CD8-positive, alpha-beta T cell (primary cell): ENCODE measurements at regions of chr22 and their contacts with region 1.

Region 1: GRCh38 chr22:30538280-30538679 is 8.3 kb downstream of the SEC14L6 start:
- DNase-seq: no peak
- ATAC-seq: no peak
- H3K4me3 ChIP-seq: no peak overlapping the region
- H3K4me3 Mint-ChIP-seq: no peak overlapping the region
- H3K27ac ChIP-seq: no peak overlapping the region
- H3K27ac Mint-ChIP-seq: no peak overlapping the region
- H3K4me1 ChIP-seq: no peaks in the 10 kb centered on the region
- H3K4me1 Mint-ChIP-seq: peaks cover 7% of the 10 kb centered on the region
- H3K27me3 ChIP-seq: peaks cover 0 to 5% of the 10 kb centered on the region in 2 experiments
- H3K27me3 Mint-ChIP-seq: peaks cover 30% of the 10 kb centered on the region
- CTCF ChIP-seq: no peak

Region 2: GRCh38 chr22:29499852-29500251 is 1038.4 kb before region 1 on chr22:
- CTCF ChIA-PET with region 1: no interaction called
- POLR2A ChIA-PET with region 1: no interaction called
- intact Hi-C with region 1: loop called in 1 of 2 experiments (anchors 5 kb)
- DNase-seq: no peak
- ATAC-seq: no peak
- H3K4me3 ChIP-seq: no peak overlapping the region
- H3K4me3 Mint-ChIP-seq: no peak overlapping the region
- H3K27ac ChIP-seq: no peak overlapping the region
- H3K27ac Mint-ChIP-seq: no peak overlapping the region
- H3K4me1 ChIP-seq: no peaks in the 10 kb centered on the region
- H3K4me1 Mint-ChIP-seq: no peaks in the 10 kb centered on the region
- H3K27me3 ChIP-seq: no peaks in the 10 kb centered on the region
- H3K27me3 Mint-ChIP-seq: no peaks in the 10 kb centered on the region
- CTCF ChIP-seq: no peak

Region 3: GRCh38 chr22:30485362-30485988 is 52.8 kb before region 1 on chr22:
- CTCF ChIA-PET with region 1: no interaction called
- POLR2A ChIA-PET with region 1: no interaction called
- intact Hi-C with region 1: no loop called
- DNase-seq: peak; percentile 60 to 85 (median 75)
- ATAC-seq: peak; percentile 98
- H3K4me3 ChIP-seq: no peak overlapping the region
- H3K4me3 Mint-ChIP-seq: no peak overlapping the region
- H3K27ac ChIP-seq: no peak overlapping the region
- H3K27ac Mint-ChIP-seq: no peak overlapping the region
- H3K4me1 ChIP-seq: no peaks in the 10 kb centered on the region
- H3K4me1 Mint-ChIP-seq: no peaks in the 10 kb centered on the region
- H3K27me3 ChIP-seq: no peaks in the 10 kb centered on the region
- H3K27me3 Mint-ChIP-seq: peaks cover 2% of the 10 kb centered on the region
- CTCF ChIP-seq: peak; percentile 95